ENCODE measurements at regions of chr1 and their contacts with region 1.

Region 1: GRCh38 chr1:109821831-109822745 is 58.4 kb upstream of the EPS8L3 start:
- DNase-seq: no peak
- ATAC-seq: no peak
- H3K4me3 ChIP-seq: no peak overlapping the region
- H3K27ac ChIP-seq: no peak overlapping the region
- H3K4me1 ChIP-seq: peaks cover 62% of the 10 kb centered on the region
- H3K27me3 ChIP-seq: peaks cover 0 to 3% of the 10 kb centered on the region in 2 experiments; a peak in 1 of 5 replicates
- CTCF ChIP-seq: no peak
- EP300 ChIP-seq: no peak
- POLR2A ChIP-seq: no peak
- RAD21 ChIP-seq: no peak

Region 2: DNA sequence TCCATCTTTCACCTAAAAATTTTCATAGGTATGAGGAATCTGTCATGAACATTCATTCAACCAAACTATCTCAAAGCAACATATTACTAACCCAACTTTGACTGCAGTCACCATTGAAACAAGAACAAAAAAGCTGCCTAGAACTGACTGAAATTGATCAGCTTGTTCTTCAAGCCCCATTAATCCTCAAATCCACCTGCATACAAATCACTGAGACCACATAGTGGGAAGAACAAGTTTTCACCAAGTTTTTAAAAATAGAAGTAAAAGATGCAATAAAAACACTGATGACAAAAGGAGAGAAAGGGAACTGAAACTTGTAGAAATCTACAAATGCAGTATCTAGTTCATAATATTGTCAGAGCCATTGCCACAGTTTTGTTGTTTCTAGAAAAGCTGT is 430.5 kb before region 1 on chr1:
- CTCF ChIA-PET with region 1: no interaction called
- POLR2A ChIA-PET with region 1: no interaction called
- in situ Hi-C with region 1: no loop called
- intact Hi-C with region 1: no loop called
- DNase-seq: no peak
- ATAC-seq: no peak
- H3K4me3 ChIP-seq: peak overlapping the region; percentile 31 to 62 (median 51); a peak in 4 of 6 replicates
- H3K27ac ChIP-seq: peak overlapping the region; percentile 84
- H3K4me1 ChIP-seq: peaks cover 94% of the 10 kb centered on the region
- H3K27me3 ChIP-seq: no peaks in the 10 kb centered on the region
- CTCF ChIP-seq: no peak
- EP300 ChIP-seq: no peak
- POLR2A ChIP-seq: no peak
- RAD21 ChIP-seq: no peak

Region 3: DNA sequence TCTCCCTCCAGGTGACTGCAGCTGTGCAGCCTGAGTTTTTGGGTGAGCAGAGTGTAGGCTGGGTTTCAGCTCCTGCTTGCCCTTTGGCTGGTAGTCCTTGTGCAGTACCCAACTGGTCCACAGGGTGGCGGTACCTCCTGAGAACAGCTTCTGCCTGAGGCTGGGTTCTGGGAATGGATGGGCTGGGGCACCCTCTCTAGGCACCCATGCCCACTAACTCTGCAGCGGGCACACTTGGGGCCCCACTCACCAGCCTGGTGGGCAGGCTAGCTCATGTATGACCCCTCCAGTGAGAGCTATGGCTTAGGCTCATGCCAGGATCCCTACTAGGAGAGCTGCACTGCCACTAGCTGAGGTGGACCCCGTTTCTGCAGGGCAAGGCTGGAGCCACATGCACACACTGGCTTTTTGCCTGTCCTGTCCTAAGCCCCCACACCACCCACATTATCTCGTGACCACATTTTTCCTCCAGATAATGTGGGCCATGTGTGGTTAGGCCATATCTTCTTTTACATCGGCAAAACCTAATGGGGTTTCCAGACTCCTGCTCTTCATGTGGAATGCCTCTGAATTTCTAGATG is 181.7 kb before region 1 on chr1:
- CTCF ChIA-PET with region 1: no interaction called
- POLR2A ChIA-PET with region 1: no interaction called
- in situ Hi-C with region 1: no loop called
- intact Hi-C with region 1: no loop called
- DNase-seq: peak; percentile 52
- ATAC-seq: peak; percentile 68
- H3K4me3 ChIP-seq: no peak overlapping the region
- H3K27ac ChIP-seq: no peak overlapping the region
- H3K4me1 ChIP-seq: peaks cover 42% of the 10 kb centered on the region
- H3K27me3 ChIP-seq: 0 out of 5 replicates have a peak, but pooled peaks cover 0 to 3% of the 10 kb centered on the region in 2 experiments
- CTCF ChIP-seq: peak; percentile 90
- EP300 ChIP-seq: no peak
- POLR2A ChIP-seq: no peak
- RAD21 ChIP-seq: peak; percentile 60

Region 4: DNA sequence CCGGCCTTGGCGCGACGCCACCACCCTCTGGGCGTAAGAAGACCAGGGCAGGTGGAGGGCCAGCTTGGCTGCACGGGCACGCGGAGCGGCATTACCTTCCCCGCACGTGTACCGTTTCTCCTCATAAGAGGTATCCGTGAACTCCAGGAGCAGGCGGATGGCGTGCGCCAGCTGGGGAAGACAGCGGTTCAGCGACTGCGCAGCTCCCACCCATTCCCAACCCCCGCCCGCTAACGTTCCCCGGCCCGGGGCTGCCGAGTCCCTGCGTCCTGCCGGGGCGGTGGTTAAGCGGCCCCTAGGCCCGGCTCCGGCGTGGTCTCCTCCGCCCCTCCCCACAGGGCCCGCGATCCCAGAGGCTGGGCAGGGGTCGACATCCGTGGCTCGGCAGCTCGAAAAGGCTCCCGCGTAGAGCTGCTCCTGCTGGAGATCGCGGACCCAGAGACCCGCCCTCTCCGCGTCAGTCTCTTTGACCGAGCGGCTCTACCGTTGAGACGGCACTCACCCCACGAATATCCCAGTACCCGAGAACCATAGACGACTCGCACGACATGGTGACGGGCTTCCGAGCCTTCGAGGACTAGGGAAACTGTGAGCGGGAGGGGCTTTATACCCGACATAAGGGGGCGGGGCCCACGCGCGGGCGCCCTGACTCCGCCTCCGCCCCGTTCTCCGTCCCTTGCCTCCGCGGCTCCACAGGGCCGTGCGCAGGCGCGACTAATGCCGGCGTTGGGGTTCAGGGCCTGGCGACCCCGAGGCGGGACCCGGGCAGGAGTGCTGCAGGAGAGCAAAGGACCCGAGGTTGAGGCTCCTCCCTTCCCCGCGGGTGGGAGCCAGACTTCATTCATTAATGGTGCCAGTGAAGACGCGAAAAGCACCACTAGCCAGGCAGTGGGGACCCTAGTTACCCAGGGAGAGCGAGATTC is 82.1 kb before region 1 on chr1:
- CTCF ChIA-PET with region 1: no interaction called
- POLR2A ChIA-PET with region 1: no interaction called
- in situ Hi-C with region 1: no loop called
- intact Hi-C with region 1: no loop called
- DNase-seq: peak; percentile 49
- ATAC-seq: peak; percentile 93
- H3K4me3 ChIP-seq: peak overlapping the region; percentile 68 to 85 (median 77)
- H3K27ac ChIP-seq: peak overlapping the region; percentile 48
- H3K4me1 ChIP-seq: peaks cover 28% of the 10 kb centered on the region
- H3K27me3 ChIP-seq: no peaks in the 10 kb centered on the region
- CTCF ChIP-seq: peak; percentile 15; the same call in 1 of the 2 replicates
- EP300 ChIP-seq: no peak
- POLR2A ChIP-seq: peak; percentile 80 to 96
- RAD21 ChIP-seq: no peak

Region 5: DNA sequence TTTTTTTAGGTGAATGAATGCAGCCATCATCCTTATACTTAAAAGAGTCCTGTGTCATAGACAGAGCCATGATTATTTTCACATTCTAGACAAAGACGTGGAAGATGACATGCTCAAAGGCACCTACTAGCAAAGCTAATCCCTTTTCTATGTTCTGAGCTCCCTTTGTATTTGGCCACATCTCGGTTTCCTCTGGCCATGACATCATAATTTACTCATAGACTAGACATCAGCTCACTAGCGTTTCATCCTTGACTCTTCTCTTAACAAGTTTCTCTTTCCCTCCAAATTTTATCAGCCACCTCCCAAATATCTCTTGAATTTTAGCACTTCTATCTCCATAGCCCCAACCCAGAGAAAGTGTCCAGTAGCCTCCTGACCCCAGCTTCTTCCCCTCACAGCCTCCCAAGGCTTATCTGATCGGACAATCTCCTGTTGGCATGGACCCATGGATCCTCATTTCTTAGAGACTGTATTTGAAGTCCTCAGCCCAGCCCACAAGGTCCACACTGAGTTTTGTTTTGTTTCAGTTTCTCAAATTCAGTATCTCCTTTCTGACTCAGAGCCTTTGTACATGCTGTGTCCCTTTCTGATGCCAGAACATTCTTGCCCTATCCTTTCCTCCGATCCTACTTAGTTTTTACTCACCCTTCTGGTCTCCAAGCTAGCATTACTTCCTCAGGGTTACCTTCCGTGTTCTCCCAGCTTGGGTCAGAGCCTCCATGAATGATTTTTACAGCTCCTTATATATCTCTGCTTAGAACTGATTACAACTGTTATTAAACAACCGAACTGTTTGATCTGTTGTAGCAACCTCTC is 25.4 kb before region 1 on chr1:
- CTCF ChIA-PET with region 1: no interaction called
- POLR2A ChIA-PET with region 1: no interaction called
- in situ Hi-C with region 1: no loop called
- intact Hi-C with region 1: loop called (anchors 2 kb)
- DNase-seq: no peak
- ATAC-seq: no peak
- H3K4me3 ChIP-seq: no peak overlapping the region
- H3K27ac ChIP-seq: no peak overlapping the region
- H3K4me1 ChIP-seq: peaks cover 36% of the 10 kb centered on the region
- H3K27me3 ChIP-seq: 0 out of 5 replicates have a peak, but pooled peaks cover 0 to 3% of the 10 kb centered on the region in 2 experiments
- CTCF ChIP-seq: no peak
- EP300 ChIP-seq: no peak
- POLR2A ChIP-seq: no peak
- RAD21 ChIP-seq: no peak

Region 6: GRCh38 chr1:110262846-110263631 is 441.0 kb after region 1 on chr1:
- CTCF ChIA-PET with region 1: no interaction called
- POLR2A ChIA-PET with region 1: no interaction called
- in situ Hi-C with region 1: no loop called
- intact Hi-C with region 1: no loop called
- DNase-seq: no peak
- ATAC-seq: no peak
- H3K4me3 ChIP-seq: no peak overlapping the region
- H3K27ac ChIP-seq: no peak overlapping the region
- H3K4me1 ChIP-seq: no peaks in the 10 kb centered on the region
- H3K27me3 ChIP-seq: peaks cover 0 to 36% of the 10 kb centered on the region in 2 experiments; a peak in 3 of 5 replicates
- CTCF ChIP-seq: no peak
- EP300 ChIP-seq: no peak
- POLR2A ChIP-seq: no peak
- RAD21 ChIP-seq: no peak